ENCODE measurements at regions of chr10 and their contacts with region 1.

Region 1: GRCh38 chr10:14604181-14605142 is 170.2 kb downstream of the FAM107B start:
- DNase-seq: peak; percentile 61 to 84 (median 82)
- H3K4me3 ChIP-seq: peak overlapping the region; percentile 75 to 100 (median 81)
- H3K4me3 Mint-ChIP-seq: peak overlapping the region; percentile 97 to 98
- H3K27ac ChIP-seq: peak overlapping the region; percentile 68 to 96
- H3K27ac Mint-ChIP-seq: peak overlapping the region; percentile 98 to 100 (median 99)
- H3K4me1 ChIP-seq: peaks cover 62 to 64% of the 10 kb centered on the region in 2 donors
- H3K4me1 Mint-ChIP-seq: peaks cover 64% of the 10 kb centered on the region
- H3K27me3 ChIP-seq: no peaks in the 10 kb centered on the region
- H3K27me3 Mint-ChIP-seq: peaks cover 0 to 3% (median 0%) of the 10 kb centered on the region in 3 donors
- CTCF ChIP-seq: no peak

Region 2: DNA sequence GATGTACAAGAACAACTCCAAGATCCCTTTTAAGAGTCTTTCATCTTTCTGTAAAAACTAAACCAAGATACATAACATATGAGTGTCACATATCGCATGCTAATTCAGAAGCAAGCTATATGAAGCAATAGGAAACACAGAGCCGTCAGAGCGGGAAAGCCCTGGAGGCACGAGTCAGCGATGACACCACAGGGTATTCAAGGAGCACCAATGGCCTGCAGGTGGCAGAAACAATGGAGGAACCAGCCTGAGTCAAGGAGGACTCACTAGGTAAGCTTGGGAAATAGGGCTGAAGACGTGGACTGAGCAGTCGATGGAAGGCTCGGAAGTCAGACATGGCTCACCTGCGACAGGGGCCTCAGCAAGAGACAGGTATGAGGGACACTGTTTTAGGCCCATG is 44.2 kb before region 1 on chr10:
- intact Hi-C with region 1: loop called (anchors 5 kb)
- DNase-seq: peak; percentile 96 to 99 (median 99)
- H3K4me3 ChIP-seq: peak overlapping the region in 2 of 3 experiments; percentile 26 to 33
- H3K4me3 Mint-ChIP-seq: peak overlapping the region; percentile 68 to 90
- H3K27ac ChIP-seq: peak overlapping the region; percentile 98 to 100
- H3K27ac Mint-ChIP-seq: peak overlapping the region; percentile 99 to 100 (median 100)
- H3K4me1 ChIP-seq: peaks cover 87 to 99% of the 10 kb centered on the region in 2 donors
- H3K4me1 Mint-ChIP-seq: peaks cover 91% of the 10 kb centered on the region
- H3K27me3 ChIP-seq: no peaks in the 10 kb centered on the region
- H3K27me3 Mint-ChIP-seq: peaks cover 0 to 3% (median 0%) of the 10 kb centered on the region in 3 donors
- CTCF ChIP-seq: peak; percentile 24

Region 3: GRCh38 chr10:14617852-14618251 is 13.4 kb after region 1 on chr10:
- intact Hi-C with region 1: loop called in 1 of 2 experiments (anchors 1 kb)
- DNase-seq: peak; percentile 88 to 97 (median 93)
- H3K4me3 ChIP-seq: peak overlapping the region in 1 of 3 experiments; percentile 35
- H3K4me3 Mint-ChIP-seq: peak overlapping the region; percentile 65 to 81
- H3K27ac ChIP-seq: peak overlapping the region; percentile 87 to 88
- H3K27ac Mint-ChIP-seq: peak overlapping the region; percentile 98 to 100 (median 99)
- H3K4me1 ChIP-seq: peaks cover 58 to 66% of the 10 kb centered on the region in 2 donors
- H3K4me1 Mint-ChIP-seq: peaks cover 59% of the 10 kb centered on the region
- H3K27me3 ChIP-seq: no peaks in the 10 kb centered on the region
- H3K27me3 Mint-ChIP-seq: peaks cover 0 to 1% (median 0%) of the 10 kb centered on the region in 3 donors
- CTCF ChIP-seq: peak; percentile 15